Gastrocnemius medialis (tissue), 4 donors: ENCODE measurements at regions of chr7 and their contacts with region 1.

Region 1: DNA sequence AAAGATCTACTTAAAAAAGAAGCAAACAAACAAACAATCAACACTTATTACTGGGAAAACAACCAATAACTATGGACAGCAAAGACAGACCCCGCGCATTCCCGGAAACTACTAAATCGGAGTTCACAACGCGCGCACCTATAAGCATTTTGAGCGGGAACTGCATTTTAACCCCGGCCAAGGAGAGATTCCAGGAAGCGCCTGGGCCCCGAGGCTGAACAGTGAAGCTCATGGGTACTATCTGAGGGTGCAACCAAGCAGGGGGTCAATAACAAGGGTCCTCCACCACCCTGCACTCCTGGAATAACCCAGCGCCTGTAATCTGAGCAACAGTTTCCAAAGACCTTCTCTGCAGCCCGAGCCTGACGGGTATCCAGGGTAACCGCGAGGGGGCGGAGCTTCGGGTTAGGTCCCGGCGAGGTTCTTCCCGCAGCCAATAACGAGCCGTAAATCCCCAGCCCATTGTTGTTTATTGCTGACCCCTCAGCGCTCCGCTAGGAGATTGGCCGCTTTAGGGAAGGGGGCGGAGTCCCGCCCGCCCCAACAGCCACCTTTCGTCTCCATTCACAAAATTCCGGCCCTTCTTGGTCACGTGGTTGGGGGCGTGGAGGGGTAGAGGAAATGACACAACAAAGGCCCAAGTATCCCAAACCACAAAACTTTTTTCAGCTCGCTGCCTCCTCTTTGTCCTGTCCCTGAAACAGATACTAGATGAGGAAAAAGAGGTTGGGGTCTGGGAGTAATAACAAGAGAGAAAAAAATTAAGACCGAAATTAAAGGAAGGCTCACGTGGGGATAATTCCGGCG is 1.7 kb upstream of the ETV1 start:
- DNase-seq: peak; percentile 84 to 91
- ATAC-seq: peak; percentile 92 to 93
- H3K4me3 ChIP-seq: peak overlapping the region; percentile 70 to 76 (median 74)
- H3K27ac ChIP-seq: peak overlapping the region; percentile 70 to 78 (median 76)
- H3K4me1 ChIP-seq: peaks cover 8 to 12% of the 10 kb centered on the region in 2 donors
- H3K27me3 ChIP-seq: peaks cover 0 to 12% (median 0%) of the 10 kb centered on the region in 3 donors
- CTCF ChIP-seq: peak in 1 of 5 experiments; percentile 27
- POLR2A ChIP-seq: peak in 1 of 2 donors; percentile 25

Region 2: GRCh38 chr7:12211054-12211710 is 1780.0 kb before region 1 on chr7 and contains the start of gene TMEM106B:
- in situ Hi-C with region 1: no loop called
- intact Hi-C with region 1: loop called (anchors 5 kb)
- DNase-seq: peak; percentile 94 to 97
- ATAC-seq: peak; percentile 92 to 93
- H3K4me3 ChIP-seq: peak within 1 kb of the TSS; percentile 76 to 90 (median 82)
- H3K27ac ChIP-seq: peak within 1 kb of the TSS; percentile 92 to 96 (median 94)
- H3K4me1 ChIP-seq: peaks cover 17% of the 10 kb centered on the region in 2 donors
- H3K27me3 ChIP-seq: no peaks in the 10 kb centered on the region
- CTCF ChIP-seq: peak in 3 of 5 experiments; percentile 25 to 41 (median 41)
- POLR2A ChIP-seq: peak; percentile 81 to 84
- total RNA-seq, gene TMEM106B: 42.8 to 112 (median 60.6) TPM

Region 3: DNA sequence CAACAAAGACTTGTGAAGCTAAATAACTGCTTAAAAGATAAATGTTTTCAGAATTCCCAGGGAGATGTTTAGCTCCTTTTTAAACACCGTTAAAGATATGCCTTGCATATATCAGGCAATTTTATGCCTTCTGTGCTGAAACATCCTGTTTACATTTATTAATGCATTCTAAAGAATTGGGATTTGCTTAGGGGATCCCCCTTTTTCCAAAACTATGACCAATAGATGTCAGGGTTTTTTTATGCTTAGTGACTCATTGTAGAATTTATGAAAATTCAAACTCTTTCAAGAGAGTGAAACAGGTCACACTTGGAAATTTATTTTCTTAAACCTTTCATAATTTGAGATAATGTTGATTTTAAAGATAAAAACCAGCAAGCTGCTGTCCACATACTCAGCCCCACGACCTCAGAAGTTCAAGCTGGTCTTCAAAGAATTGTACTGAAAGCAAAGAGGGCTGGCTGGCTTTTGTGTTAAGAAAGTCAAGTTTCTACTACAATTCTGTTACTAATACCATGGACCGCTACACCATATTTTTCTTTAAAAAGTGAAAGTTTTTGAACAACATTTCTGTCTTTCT is 413.5 kb before region 1 on chr7:
- in situ Hi-C with region 1: no loop called
- intact Hi-C with region 1: no loop called
- DNase-seq: no peak
- ATAC-seq: no peak
- H3K4me3 ChIP-seq: no peak overlapping the region
- H3K27ac ChIP-seq: no peak overlapping the region
- H3K4me1 ChIP-seq: no peaks in the 10 kb centered on the region
- H3K27me3 ChIP-seq: no peaks in the 10 kb centered on the region
- CTCF ChIP-seq: no peak
- POLR2A ChIP-seq: no peak

Region 4: GRCh38 chr7:13981070-13981469 is 10.1 kb before region 1 on chr7:
- in situ Hi-C with region 1: no loop called
- intact Hi-C with region 1: no loop called
- DNase-seq: peak; percentile 10 to 36
- ATAC-seq: peak; percentile 85 to 88
- H3K4me3 ChIP-seq: no peak overlapping the region
- H3K27ac ChIP-seq: no peak overlapping the region
- H3K4me1 ChIP-seq: no peaks in the 10 kb centered on the region
- H3K27me3 ChIP-seq: peaks cover 0 to 4% (median 0%) of the 10 kb centered on the region in 3 donors
- CTCF ChIP-seq: no peak
- POLR2A ChIP-seq: no peak